ENCODE measurements at regions of chr11 and their contacts with region 1.

Region 1: GRCh38 chr11:36073411-36074203 is 129.7 kb downstream of the LDLRAD3 start:
- DNase-seq: no peak
- H3K4me3 ChIP-seq: no peak overlapping the region
- H3K27ac ChIP-seq: peak overlapping the region; percentile 19; the same call in 1 of the 2 replicates
- H3K4me1 ChIP-seq: peaks cover 8 to 32% (median 27%) of the 10 kb centered on the region in 4 experiments
- H3K27me3 ChIP-seq: no peaks in the 10 kb centered on the region
- CTCF ChIP-seq: no peak
- EP300 ChIP-seq: no peak
- POLR2A ChIP-seq: no peak
- RAD21 ChIP-seq: no peak

Region 2: GRCh38 chr11:35765211-35765610 is 308.4 kb before region 1 on chr11:
- CTCF ChIA-PET with region 1: no interaction called
- POLR2A ChIA-PET with region 1: no interaction called
- DNase-seq: no peak
- H3K4me3 ChIP-seq: no peak overlapping the region
- H3K27ac ChIP-seq: no peak overlapping the region
- H3K4me1 ChIP-seq: no peaks in the 10 kb centered on the region
- H3K27me3 ChIP-seq: no peaks in the 10 kb centered on the region
- CTCF ChIP-seq: no peak
- EP300 ChIP-seq: no peak
- POLR2A ChIP-seq: no peak
- RAD21 ChIP-seq: no peak

Region 3: DNA sequence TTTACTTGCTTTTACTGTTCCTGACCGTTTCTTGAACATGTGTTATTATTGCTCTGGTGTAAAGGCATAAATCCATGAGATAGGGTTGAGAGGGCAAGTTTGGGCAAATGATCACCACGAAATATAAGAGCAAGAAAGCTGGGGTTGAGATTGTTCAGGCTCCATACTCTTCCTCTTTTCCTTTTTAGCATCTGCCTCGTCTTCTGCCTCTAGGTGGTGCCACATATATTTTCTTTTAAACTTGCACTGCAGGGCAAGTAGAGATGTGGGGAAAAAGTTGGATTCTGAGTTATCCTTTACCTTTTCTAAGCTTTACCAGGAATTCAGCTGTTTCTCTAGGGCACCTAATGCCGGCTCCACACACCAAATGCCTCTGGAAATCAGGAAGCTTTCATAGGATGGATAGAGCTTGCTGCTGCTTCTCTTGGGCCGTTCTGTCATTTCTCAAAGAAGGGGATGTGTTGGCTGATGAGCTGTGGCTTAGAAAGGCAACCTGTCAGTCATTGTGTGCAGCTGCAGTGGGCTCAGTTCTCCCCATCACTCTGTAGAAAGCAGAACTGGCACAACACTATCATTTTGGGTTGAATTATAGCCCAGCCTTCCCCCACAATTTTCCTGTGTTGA is 31.5 kb before region 1 on chr11:
- CTCF ChIA-PET with region 1: interaction called, 24 read pairs
- POLR2A ChIA-PET with region 1: no interaction called
- DNase-seq: no peak
- H3K4me3 ChIP-seq: no peak overlapping the region
- H3K27ac ChIP-seq: no peak overlapping the region
- H3K4me1 ChIP-seq: peaks cover 0 to 9% (median 4%) of the 10 kb centered on the region in 4 experiments; a peak in 3 of 7 replicates
- H3K27me3 ChIP-seq: no peaks in the 10 kb centered on the region
- CTCF ChIP-seq: peak in 2 of 3 experiments; percentile 48 to 52; a peak in 2 of 4 replicates
- EP300 ChIP-seq: no peak
- POLR2A ChIP-seq: no peak
- RAD21 ChIP-seq: peak; percentile 50 to 59

Region 4: DNA sequence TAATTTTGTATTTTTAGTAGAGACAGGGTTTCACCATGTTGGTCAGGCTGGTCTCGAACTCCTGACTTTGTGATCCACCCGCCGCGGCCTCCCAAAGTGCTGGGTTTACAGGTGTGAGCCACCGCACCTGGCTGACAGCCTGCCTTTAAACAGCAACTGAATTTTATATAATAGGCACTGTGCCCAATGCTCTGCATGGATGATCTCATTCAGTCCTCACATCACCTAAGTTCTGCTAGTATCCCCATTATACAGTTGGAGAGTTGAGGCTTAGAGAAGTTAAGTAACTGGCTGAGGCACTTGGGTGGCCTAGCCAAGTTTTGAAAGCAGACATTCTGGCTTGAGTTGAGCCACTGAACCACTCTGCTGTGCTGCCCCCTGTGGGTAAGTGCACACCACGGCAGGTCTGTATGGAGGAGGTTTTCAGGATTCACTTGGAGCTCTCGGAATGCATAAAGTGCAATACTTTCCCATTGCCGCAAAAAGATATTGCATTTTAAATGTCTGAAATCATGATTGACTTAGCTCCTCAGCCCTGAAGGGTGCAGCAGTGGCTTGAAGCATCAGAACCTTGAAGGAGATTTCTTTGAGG is 17.4 kb before region 1 on chr11:
- CTCF ChIA-PET with region 1: interaction called, 48 read pairs
- POLR2A ChIA-PET with region 1: no interaction called
- DNase-seq: peak in 1 of 2 experiments; percentile 74
- H3K4me3 ChIP-seq: no peak overlapping the region
- H3K27ac ChIP-seq: no peak overlapping the region
- H3K4me1 ChIP-seq: peaks cover 0 to 14% (median 4%) of the 10 kb centered on the region in 4 experiments; a peak in 3 of 7 replicates
- H3K27me3 ChIP-seq: no peaks in the 10 kb centered on the region
- CTCF ChIP-seq: peak; percentile 85 to 94 (median 88)
- EP300 ChIP-seq: no peak
- POLR2A ChIP-seq: no peak
- RAD21 ChIP-seq: peak; percentile 85 to 89

Region 5: DNA sequence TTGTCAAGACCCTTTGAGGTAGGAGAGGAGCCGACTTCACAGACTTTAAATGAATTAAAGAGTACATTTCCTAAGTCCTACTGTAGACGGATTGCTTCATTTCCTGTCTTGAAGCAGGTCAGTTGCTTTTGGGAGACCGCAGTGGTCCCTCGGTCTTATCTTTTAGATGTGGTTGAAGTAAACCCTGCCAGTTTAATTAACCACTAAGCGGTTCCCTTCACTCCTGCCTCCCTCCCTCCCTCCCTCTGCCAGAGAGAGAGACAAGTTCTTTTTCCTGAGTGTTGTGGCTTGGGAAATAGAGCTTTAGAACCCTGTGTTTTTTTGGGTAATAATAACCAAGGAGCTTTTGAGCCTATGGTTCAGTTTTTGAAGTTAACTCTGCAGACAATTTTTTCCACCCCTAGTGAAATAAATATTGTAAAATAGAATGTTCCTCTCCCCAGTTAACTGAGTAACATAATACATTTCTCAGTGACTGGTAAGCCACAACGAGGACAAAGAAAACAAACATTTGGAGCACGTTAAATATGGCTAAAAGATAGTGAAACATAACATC is 17.7 kb after region 1 on chr11:
- CTCF ChIA-PET with region 1: interaction called, 18 read pairs
- POLR2A ChIA-PET with region 1: interaction called, 5 read pairs
- DNase-seq: no peak
- H3K4me3 ChIP-seq: no peak overlapping the region
- H3K27ac ChIP-seq: peak overlapping the region; percentile 52; the same call in 1 of the 2 replicates
- H3K4me1 ChIP-seq: peaks cover 6 to 33% (median 24%) of the 10 kb centered on the region in 4 experiments; a peak in 5 of 7 replicates
- H3K27me3 ChIP-seq: no peaks in the 10 kb centered on the region
- CTCF ChIP-seq: no peak
- EP300 ChIP-seq: no peak
- POLR2A ChIP-seq: no peak
- RAD21 ChIP-seq: no peak

Region 6: GRCh38 chr11:36109850-36110606 is 36.4 kb after region 1 on chr11:
- CTCF ChIA-PET with region 1: interaction called, 9 read pairs
- POLR2A ChIA-PET with region 1: interaction called, 23 read pairs
- DNase-seq: peak in 1 of 2 experiments; percentile 62
- H3K4me3 ChIP-seq: peak overlapping the region in 2 of 4 experiments; percentile 3 to 38; a peak in 3 of 8 replicates
- H3K27ac ChIP-seq: peak overlapping the region; percentile 97
- H3K4me1 ChIP-seq: peaks cover 16 to 37% (median 30%) of the 10 kb centered on the region in 4 experiments
- H3K27me3 ChIP-seq: no peaks in the 10 kb centered on the region
- CTCF ChIP-seq: no peak
- EP300 ChIP-seq: peak in 1 of 2 experiments; percentile 88; a peak in 1 of 3 replicates
- POLR2A ChIP-seq: peak; percentile 18 to 91
- RAD21 ChIP-seq: no peak